PC-3 (cell line): ENCODE measurements at regions of chr2 and their contacts with region 1.

Region 1: GRCh38 chr2:231104115-231104713 is 20.6 kb downstream of the HTR2B start:
- DNase-seq: peak; percentile 77
- ATAC-seq: peak; percentile 46
- H3K4me3 ChIP-seq: no peak overlapping the region
- H3K27ac ChIP-seq: no peak overlapping the region
- H3K4me1 ChIP-seq: peaks cover 37% of the 10 kb centered on the region
- H3K27me3 ChIP-seq: no peaks in the 10 kb centered on the region
- CTCF ChIP-seq: peak; percentile 67

Region 2: DNA sequence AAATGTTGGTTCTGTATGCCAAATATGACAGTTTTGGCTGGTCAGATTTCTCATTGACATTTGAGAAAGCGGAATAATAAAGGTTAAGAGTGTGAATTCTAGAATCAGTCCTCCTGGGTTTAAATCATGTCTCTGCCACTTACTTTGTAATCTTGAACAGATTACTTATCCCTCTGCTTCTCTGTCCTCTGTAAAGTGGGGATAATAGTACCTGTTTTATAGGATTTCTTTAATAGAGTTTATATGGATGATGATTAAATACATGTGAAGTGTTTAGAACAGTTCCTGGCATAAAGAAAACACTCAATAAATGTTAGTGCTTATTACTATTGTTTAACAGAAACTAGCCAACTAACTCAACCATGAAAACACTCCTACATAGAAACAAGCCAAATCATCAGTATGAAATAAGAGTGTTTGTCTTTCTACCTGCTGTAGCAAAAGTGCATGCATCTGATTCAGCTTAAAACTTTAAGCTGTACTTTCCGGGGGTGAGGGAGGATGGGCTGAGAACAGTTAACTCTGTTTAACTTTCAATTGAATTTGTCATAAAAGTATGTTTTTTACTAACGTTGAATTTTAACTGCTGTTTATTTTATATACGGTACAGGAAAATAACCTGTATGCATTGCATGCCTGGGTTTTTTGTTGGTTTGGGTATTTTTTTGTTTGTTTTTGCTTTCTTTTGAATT is 13.9 kb after region 1 on chr2:
- CTCF ChIA-PET with region 1: no interaction called
- POLR2A ChIA-PET with region 1: no interaction called
- intact Hi-C with region 1: no loop called
- DNase-seq: peak; percentile 23
- ATAC-seq: peak; percentile 92
- H3K4me3 ChIP-seq: no peak overlapping the region
- H3K27ac ChIP-seq: peak overlapping the region; percentile 74
- H3K4me1 ChIP-seq: peaks cover 12% of the 10 kb centered on the region
- H3K27me3 ChIP-seq: no peaks in the 10 kb centered on the region
- CTCF ChIP-seq: no peak

Region 3: GRCh38 chr2:231132126-231132525 is 27.9 kb after region 1 on chr2:
- CTCF ChIA-PET with region 1: no interaction called
- POLR2A ChIA-PET with region 1: no interaction called
- intact Hi-C with region 1: loop called (anchors 2 kb)
- DNase-seq: peak; percentile 76
- ATAC-seq: peak; percentile 28
- H3K4me3 ChIP-seq: peak overlapping the region; percentile 39; the same call in 1 of the 2 replicates
- H3K27ac ChIP-seq: peak overlapping the region; percentile 85
- H3K4me1 ChIP-seq: peaks cover 75% of the 10 kb centered on the region
- H3K27me3 ChIP-seq: no peaks in the 10 kb centered on the region
- CTCF ChIP-seq: no peak

Region 4: GRCh38 chr2:231161877-231162329 is 57.7 kb after region 1 on chr2:
- CTCF ChIA-PET with region 1: no interaction called
- POLR2A ChIA-PET with region 1: no interaction called
- intact Hi-C with region 1: loop called (anchors 2 kb)
- DNase-seq: peak; percentile 64
- ATAC-seq: peak; percentile 88
- H3K4me3 ChIP-seq: no peak overlapping the region
- H3K27ac ChIP-seq: peak overlapping the region; percentile 72
- H3K4me1 ChIP-seq: peaks cover 16% of the 10 kb centered on the region
- H3K27me3 ChIP-seq: no peaks in the 10 kb centered on the region
- CTCF ChIP-seq: no peak

Region 5: DNA sequence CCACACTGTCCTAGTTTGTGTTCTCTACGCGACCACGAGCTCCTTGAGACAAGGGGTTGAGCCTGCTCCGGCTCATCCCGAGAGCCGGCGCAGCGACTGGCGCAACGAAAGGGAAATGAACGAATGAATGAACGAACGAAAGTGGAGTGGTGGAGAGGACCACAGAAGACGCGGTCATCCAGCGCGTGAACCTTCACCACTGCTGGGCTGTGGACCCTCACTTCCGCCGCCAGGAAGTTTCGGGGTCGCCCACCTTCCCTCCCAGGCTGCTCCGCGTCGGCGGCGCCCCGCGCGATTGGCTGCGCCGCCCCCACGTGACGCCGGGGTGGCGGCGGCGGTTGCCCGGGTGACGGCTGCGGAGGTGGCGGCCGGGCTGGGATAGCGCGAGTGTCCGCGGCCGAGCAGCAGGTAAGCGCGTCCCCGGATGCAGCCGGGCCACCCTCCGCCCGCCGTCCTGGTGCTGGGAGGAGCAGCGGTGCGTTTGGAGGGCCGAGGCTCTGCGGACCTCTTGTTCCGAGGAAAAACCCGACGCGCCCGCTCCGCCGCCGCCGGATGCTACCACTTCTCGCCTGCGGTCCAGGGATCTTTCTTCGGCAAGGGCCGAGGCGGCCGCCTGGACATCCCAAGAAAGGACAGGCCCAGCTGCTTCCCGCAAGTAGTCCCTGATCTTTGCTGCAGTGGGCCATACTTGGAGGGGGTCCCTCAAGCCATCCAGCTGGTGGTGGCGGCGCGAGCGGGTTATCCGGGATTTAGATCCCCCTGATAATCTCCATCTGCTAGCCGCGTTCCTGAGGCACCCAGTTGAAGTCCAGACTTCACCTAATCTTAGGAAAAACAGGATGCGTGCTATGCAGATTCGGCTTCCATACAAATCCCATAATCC is 94.3 kb after region 1 on chr2 and contains the start of gene ARMC9:
- CTCF ChIA-PET with region 1: no interaction called
- POLR2A ChIA-PET with region 1: no interaction called
- intact Hi-C with region 1: loop called (anchors 5 kb)
- DNase-seq: peak; percentile 72
- ATAC-seq: peak; percentile 89
- H3K4me3 ChIP-seq: peak within 1 kb of the TSS; percentile 99
- H3K27ac ChIP-seq: peak within 1 kb of the TSS; percentile 12
- H3K4me1 ChIP-seq: peaks cover 27% of the 10 kb centered on the region
- H3K27me3 ChIP-seq: no peaks in the 10 kb centered on the region
- CTCF ChIP-seq: no peak
- total RNA-seq, gene ARMC9: 12.8 and 23.4 TPM in 2 replicates

Region 6: GRCh38 chr2:231212329-231212845 is 108.2 kb after region 1 on chr2:
- CTCF ChIA-PET with region 1: no interaction called
- POLR2A ChIA-PET with region 1: no interaction called
- intact Hi-C with region 1: loop called (anchors 1 kb)
- DNase-seq: peak; percentile 92
- ATAC-seq: peak; percentile 89
- H3K4me3 ChIP-seq: no peak overlapping the region
- H3K27ac ChIP-seq: peak overlapping the region; percentile 88
- H3K4me1 ChIP-seq: peaks cover 31% of the 10 kb centered on the region
- H3K27me3 ChIP-seq: no peaks in the 10 kb centered on the region
- CTCF ChIP-seq: no peak

Region 7: GRCh38 chr2:231297108-231297908 is 193.1 kb after region 1 on chr2:
- CTCF ChIA-PET with region 1: no interaction called
- POLR2A ChIA-PET with region 1: no interaction called
- intact Hi-C with region 1: loop called (anchors 5 kb)
- DNase-seq: peak; percentile 68
- ATAC-seq: peak; percentile 57
- H3K4me3 ChIP-seq: no peak overlapping the region
- H3K27ac ChIP-seq: peak overlapping the region; percentile 39
- H3K4me1 ChIP-seq: peaks cover 32% of the 10 kb centered on the region
- H3K27me3 ChIP-seq: no peaks in the 10 kb centered on the region
- CTCF ChIP-seq: peak; percentile 86

Region 8: DNA sequence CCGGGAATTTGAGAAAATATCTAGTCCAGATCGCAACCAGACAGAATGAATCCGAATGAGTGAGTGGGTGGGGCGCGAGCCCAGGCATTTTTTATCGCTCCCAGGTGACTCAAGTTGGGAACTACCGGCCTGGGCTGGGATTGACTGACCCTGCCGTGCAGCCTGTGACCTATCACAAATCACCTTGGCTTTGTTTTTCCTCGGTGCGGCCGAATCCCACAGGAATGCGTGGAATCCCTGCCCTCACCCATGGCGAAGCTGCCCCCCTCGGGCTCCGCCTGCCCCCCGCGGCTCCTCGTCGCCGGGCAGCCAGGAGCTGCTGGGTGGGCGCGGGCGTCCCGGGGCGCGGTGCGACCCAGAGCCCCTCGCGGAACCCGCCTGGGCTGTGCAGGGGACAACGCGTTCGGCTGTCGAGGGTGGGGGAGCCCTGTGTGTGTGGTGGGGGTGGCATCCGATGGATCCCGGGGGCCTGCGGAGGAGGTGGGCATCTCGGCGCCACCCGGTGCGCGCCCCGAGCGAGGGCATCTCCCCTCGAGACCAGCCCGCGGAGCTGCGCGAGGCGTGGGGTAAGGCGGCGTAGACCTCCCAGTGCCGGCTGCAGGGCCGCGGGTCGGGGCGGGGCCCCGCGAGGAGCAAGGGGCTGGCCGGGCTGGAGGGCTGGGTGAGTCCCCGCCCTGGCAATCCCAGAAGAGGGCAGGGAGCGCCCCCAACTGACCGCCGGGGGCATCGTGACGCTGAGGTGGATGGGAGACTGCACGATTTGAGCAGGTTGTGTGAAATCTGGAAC is 307.8 kb after region 1 on chr2:
- CTCF ChIA-PET with region 1: no interaction called
- POLR2A ChIA-PET with region 1: no interaction called
- intact Hi-C with region 1: loop called (anchors 1 kb)
- DNase-seq: peak; percentile 91
- ATAC-seq: peak; percentile 97
- H3K4me3 ChIP-seq: peak overlapping the region; percentile 85
- H3K27ac ChIP-seq: peak overlapping the region; percentile 77
- H3K4me1 ChIP-seq: peaks cover 14% of the 10 kb centered on the region
- H3K27me3 ChIP-seq: no peaks in the 10 kb centered on the region
- CTCF ChIP-seq: peak; percentile 93